ENCODE measurements at regions of chr2 and their contacts with region 1.

Region 1: GRCh38 chr2:111705711-111706336 is 178.2 kb downstream of the ANAPC1 start:
- DNase-seq: no peak
- H3K4me3 ChIP-seq: no peak overlapping the region
- H3K27ac ChIP-seq: no peak overlapping the region
- H3K4me1 ChIP-seq: peaks cover 18 to 50% (median 45%) of the 10 kb centered on the region in 4 donors
- H3K27me3 ChIP-seq: no peaks in the 10 kb centered on the region
- CTCF ChIP-seq: no peak
- EP300 ChIP-seq: no peak
- POLR2A ChIP-seq: no peak

Region 2: GRCh38 chr2:110853507-110853906 is 852.3 kb before region 1 on chr2:
- intact Hi-C with region 1: no loop called
- DNase-seq: no peak
- H3K4me3 ChIP-seq: no peak overlapping the region
- H3K27ac ChIP-seq: no peak overlapping the region
- H3K4me1 ChIP-seq: no peaks in the 10 kb centered on the region
- H3K27me3 ChIP-seq: peaks cover 0 to 21% (median under 1%) of the 10 kb centered on the region in 4 donors
- CTCF ChIP-seq: peak in 1 of 3 experiments; percentile 38
- EP300 ChIP-seq: no peak
- POLR2A ChIP-seq: no peak

Region 3: DNA sequence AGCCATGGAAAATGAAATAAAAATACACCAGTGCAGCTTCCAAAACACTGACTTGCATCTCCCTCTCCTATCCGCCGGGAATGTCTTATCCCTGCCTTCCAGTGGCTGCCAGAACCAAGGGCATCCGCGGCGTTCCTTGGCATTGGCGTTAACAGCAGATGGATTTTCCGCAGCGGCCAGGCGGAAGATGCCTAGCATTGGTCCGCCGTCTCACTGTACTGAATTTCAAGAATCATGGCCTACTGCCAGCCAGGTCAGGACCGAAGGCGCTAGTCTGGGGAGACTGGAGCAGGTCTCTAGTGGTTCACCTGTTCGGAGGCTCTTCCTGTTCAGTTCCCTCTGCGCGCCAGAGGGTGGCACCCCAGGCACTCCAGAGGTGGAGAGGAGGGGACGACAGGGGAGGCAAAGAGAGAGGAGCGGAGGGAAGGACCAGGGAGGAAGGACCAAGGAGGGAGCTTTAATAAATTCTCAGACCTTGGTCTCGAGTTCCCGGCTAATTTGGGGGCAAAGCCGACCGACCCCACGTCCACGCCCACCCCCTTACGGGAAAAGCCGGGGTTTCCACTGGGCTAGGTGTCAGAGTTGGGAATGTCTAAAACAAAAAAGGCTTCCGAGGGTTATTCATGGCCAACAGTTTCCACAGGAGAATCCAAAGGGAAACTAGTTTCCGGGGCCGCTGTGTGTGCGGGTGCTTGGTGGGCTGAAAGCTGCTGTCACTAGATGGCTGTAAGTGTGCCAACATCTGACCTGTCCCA is 588.8 kb before region 1 on chr2:
- intact Hi-C with region 1: loop called (anchors 10 kb)
- DNase-seq: peak; percentile 91
- H3K4me3 ChIP-seq: peak overlapping the region; percentile 82 to 92 (median 84)
- H3K27ac ChIP-seq: no peak overlapping the region
- H3K4me1 ChIP-seq: peaks cover 44 to 51% (median 48%) of the 10 kb centered on the region in 4 donors
- H3K27me3 ChIP-seq: peaks cover 3 to 85% (median 7%) of the 10 kb centered on the region in 4 donors
- CTCF ChIP-seq: peak; percentile 85 to 92 (median 85)
- EP300 ChIP-seq: no peak
- POLR2A ChIP-seq: no peak

Measured in esophagus muscularis mucosa (tissue), 4 donors.